ENCODE measurements at regions of chr10 and their contacts with region 1.

Region 1: GRCh38 chr10:71209352-71209715 is 3.0 kb upstream of the UNC5B start:
- DNase-seq: no peak
- H3K4me3 ChIP-seq: no peak overlapping the region
- H3K27ac ChIP-seq: no peak overlapping the region
- H3K4me1 ChIP-seq: peaks cover 5 to 32% (median 7%) of the 10 kb centered on the region in 3 donors
- H3K27me3 ChIP-seq: peaks cover 0 to 49% (median 3%) of the 10 kb centered on the region in 4 donors
- CTCF ChIP-seq: no peak
- POLR2A ChIP-seq: no peak

Region 2: DNA sequence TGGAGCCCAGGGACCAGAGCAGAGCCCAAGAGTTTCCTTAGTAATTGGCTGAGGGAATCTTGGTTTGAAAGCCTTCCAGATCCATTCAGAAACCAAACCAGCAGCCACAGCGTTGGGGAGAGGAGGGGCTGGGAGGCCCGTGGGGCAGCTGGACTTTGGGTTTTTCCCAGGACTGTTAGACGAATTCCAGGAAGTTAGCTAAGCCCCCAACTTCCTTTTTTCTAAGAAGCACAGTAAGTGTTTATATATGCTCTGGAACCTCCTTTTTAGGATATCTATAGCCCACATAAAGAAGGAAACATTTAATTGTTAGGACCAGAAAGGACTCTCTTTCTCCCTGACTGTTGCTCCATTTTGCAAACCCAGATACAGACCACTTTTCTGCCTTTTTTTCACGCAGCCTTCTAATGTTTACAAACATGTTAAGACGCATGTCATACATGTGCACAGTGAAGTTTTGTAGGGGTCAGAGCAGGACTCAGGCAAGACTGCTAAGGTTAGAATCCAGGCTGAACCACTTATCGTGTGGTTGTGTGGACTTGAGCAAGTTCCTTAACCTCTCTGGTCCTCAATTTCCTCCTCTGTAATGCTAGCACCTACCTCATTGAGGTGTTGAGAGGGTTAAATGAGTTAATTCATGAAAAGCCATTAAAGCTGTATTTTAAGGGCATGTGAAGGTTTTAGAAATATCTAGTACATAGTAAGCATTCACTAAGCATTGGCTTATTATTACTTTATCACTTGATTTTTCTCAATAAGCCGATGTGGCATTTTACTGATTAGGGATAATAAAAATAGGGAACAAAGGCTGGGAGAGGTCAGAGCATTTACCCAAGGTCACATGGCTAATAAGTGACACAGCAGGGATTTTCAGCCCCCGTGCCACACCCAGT is 466.6 kb before region 1 on chr10:
- intact Hi-C with region 1: no loop called
- DNase-seq: no peak
- H3K4me3 ChIP-seq: no peak overlapping the region
- H3K27ac ChIP-seq: no peak overlapping the region
- H3K4me1 ChIP-seq: peaks cover 0 to 21% (median 8%) of the 10 kb centered on the region in 3 donors
- H3K27me3 ChIP-seq: no peaks in the 10 kb centered on the region
- CTCF ChIP-seq: no peak
- POLR2A ChIP-seq: no peak

Region 3: GRCh38 chr10:70925377-70926225 is 283.7 kb before region 1 on chr10:
- intact Hi-C with region 1: loop called (anchors 5 kb)
- DNase-seq: no peak
- H3K4me3 ChIP-seq: no peak overlapping the region
- H3K27ac ChIP-seq: no peak overlapping the region
- H3K4me1 ChIP-seq: peaks cover 0 to 35% (median 2%) of the 10 kb centered on the region in 3 donors
- H3K27me3 ChIP-seq: peaks cover 0 to 38% (median 0%) of the 10 kb centered on the region in 4 donors
- CTCF ChIP-seq: peak; percentile 54 to 97 (median 90)
- POLR2A ChIP-seq: no peak

Region 4: GRCh38 chr10:71085689-71086438 is 123.5 kb before region 1 on chr10:
- intact Hi-C with region 1: no loop called
- DNase-seq: no peak
- H3K4me3 ChIP-seq: no peak overlapping the region
- H3K27ac ChIP-seq: no peak overlapping the region
- H3K4me1 ChIP-seq: peaks cover 0 to 12% (median 0%) of the 10 kb centered on the region in 3 donors
- H3K27me3 ChIP-seq: peaks cover 0 to 4% (median 0%) of the 10 kb centered on the region in 4 donors
- CTCF ChIP-seq: no peak
- POLR2A ChIP-seq: no peak

Region 5: GRCh38 chr10:71116426-71116825 is 92.9 kb before region 1 on chr10:
- intact Hi-C with region 1: no loop called
- DNase-seq: no peak
- H3K4me3 ChIP-seq: no peak overlapping the region
- H3K27ac ChIP-seq: no peak overlapping the region
- H3K4me1 ChIP-seq: no peaks in the 10 kb centered on the region
- H3K27me3 ChIP-seq: peaks cover 0 to 21% (median 0%) of the 10 kb centered on the region in 4 donors
- CTCF ChIP-seq: no peak
- POLR2A ChIP-seq: no peak

Region 6: DNA sequence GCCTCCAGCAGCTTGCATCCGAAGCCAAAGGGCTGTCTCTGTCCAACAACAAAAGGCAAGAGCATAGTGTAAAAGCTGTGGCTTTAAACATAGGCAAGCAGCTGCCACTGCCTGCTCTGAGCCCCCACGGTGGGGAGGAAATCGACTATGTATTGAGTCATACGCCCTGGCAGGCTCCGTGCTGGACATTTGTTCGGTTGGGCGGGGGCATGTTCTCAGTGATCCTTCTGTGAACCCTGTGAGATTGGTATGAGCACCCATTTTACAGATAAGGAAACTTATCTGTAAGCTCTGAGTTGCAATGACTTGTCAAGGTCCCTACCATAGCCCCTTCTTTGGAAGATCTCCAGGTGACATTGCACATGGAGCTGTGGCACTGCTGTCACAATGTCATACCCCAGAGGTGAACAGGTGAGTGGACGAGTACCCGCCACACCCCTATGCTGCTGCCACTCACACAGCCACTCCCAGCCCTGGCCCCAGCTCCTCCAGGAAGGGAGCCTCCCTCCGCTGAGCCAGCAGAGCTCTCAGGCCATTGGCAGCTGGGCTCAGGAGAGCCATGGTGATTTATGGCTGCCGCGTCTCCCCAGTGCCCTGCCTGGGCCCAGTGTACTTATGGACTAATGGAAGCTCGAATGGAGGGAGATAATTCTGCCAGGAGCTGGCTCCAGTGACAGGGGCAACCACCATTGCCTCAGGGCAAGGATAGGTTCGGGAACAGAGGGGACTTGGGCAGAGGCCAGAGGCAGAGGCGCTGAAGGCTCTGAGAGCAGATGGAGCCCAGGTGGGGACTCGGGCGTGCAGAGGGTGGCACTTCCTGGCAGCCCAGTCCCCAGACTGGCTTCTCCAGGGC is 46.7 kb after region 1 on chr10:
- intact Hi-C with region 1: no loop called
- DNase-seq: no peak
- H3K4me3 ChIP-seq: no peak overlapping the region
- H3K27ac ChIP-seq: peak overlapping the region; percentile 71 to 87 (median 81)
- H3K4me1 ChIP-seq: peaks cover 34 to 100% (median 48%) of the 10 kb centered on the region in 3 donors
- H3K27me3 ChIP-seq: no peaks in the 10 kb centered on the region
- CTCF ChIP-seq: no peak
- POLR2A ChIP-seq: peak in 1 of 4 donors; percentile 35

Measured in esophagus squamous epithelium (tissue), 5 donors.